ENCODE measurements at regions of chr5 and their contacts with region 1.

Region 1: DNA sequence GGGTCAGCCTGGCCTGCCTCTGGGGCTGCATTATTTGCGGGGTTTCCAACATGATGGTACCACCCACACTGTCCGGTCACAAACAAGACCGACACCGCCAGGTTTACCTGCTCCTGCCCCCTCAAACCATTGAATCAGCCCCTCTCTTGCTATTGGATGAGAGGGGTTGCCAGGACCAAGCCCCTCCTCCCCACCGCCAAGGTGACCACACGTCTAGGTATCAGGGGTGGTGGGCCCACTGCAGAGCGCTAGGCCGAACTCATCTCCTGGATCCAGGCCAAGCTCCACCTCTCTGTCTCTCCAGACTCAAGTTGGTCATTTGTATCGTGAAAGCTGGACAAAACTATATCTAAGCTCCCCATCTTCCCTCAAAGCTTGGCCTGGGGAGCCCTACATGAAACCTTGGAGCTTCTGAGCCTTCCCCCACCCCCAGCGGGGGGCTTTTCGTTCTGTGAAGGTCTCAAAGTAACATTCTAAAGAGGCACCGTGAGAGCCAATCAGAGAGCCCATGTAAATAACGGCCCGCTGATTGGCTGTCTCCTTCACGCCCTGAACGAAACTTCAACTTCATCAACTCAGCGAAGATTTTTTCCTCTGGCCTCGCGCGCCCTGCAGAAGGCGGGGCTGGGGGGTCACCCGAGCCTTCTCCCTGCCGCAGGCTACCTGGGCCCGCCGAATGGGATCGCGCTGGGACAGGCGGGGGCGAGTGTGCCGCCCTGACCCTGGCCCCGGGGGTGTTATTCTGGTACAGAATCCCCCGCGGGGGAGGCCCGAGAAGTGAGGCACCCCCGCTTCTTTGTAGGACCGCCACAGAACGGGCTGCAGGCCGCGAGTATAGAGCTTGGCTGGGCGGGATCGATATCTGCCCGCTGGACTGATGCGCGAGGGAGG is 49.6 kb upstream of the PSD2 start:
- DNase-seq: peak; percentile 50
- H3K4me3 Mint-ChIP-seq: peak overlapping the region; percentile 72
- H3K27ac Mint-ChIP-seq: no peak overlapping the region
- H3K4me1 Mint-ChIP-seq: peaks cover 21% of the 10 kb centered on the region
- H3K27me3 Mint-ChIP-seq: peaks cover 15% of the 10 kb centered on the region

Region 2: DNA sequence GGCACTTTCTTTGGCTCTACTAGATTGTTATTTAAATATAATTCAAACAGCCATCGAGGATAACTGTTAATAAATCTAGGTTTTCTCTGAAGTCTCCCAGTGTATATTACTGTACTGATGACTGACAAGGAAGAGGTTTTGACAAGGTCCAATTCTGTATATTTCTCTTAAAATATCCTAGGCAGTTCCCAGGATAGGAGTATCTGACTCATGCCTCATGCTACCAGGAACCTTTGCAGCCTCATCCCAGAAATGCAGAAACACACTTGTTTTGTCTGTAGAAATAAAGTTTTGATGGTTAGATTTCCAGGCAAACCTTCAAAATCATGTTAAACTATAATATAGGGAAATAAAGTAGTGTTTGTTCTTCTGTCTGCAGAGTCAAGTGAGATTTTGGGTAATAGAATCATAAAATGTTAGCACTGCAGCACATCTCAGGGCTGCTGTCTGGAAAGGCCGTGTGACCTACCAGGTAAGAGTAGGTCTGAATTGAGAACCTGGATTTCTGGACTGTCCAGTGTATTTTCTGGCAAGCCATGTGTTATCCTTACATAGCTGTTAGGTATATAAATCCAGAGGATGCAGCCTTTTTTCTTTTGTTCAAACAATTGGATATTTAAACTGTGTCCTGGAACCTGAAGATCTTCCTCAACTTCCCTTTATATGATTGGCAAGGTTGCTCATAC is 176.6 kb before region 1 on chr5:
- CTCF ChIA-PET with region 1: no interaction called
- intact Hi-C with region 1: no loop called
- DNase-seq: no peak
- H3K4me3 Mint-ChIP-seq: no peak overlapping the region
- H3K27ac Mint-ChIP-seq: peak overlapping the region; percentile 55
- H3K4me1 Mint-ChIP-seq: peaks cover 81% of the 10 kb centered on the region
- H3K27me3 Mint-ChIP-seq: no peaks in the 10 kb centered on the region

Region 3: DNA sequence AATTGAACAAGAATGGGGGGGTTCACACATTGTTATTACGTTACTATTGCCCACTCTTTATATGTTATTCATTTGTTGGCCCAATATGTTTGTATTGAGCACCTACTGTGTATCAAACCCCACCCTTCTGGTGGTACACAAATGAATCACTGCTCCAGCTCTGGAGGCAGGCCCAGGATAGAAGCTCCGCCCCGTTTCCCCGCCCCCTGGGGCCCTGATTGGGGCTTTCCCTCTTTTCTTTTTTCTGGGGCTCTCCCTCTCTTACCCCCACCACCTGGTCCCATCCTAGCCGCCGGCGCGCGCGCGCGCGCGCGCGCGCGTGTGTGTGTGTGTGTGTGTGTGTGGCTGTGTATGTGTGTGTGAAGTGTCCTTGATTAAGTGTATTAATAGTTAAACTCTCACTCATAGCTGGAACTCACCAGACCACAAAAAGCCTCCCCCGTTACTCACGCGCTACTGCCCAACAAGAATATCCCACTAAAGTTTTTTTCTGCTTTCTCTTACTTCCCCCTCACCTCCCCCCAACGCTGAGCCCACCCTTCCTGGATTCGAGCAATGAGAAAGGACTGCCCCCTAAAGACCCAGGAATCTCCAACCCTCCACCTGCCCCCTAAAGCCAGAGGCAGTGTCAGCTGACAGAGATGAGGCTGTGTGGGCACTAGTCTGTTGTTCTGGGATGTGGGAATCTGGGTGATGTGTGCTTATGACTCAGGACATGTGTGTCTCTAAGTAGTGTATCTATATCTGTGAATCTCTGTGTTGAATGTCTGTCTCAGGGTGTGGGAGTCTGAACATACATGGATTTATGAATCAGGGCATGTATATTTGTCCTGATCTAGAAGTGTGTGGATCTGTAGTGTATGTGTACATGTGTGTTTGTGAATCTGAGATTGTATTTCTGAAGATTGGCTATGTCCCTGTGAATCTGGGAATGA is 93.9 kb before region 1 on chr5:
- CTCF ChIA-PET with region 1: no interaction called
- intact Hi-C with region 1: loop called (anchors 1 kb)
- DNase-seq: peak; percentile 82
- H3K4me3 Mint-ChIP-seq: no peak overlapping the region
- H3K27ac Mint-ChIP-seq: no peak overlapping the region
- H3K4me1 Mint-ChIP-seq: peaks cover 31% of the 10 kb centered on the region
- H3K27me3 Mint-ChIP-seq: peaks cover 49% of the 10 kb centered on the region

Region 4: GRCh38 chr5:139696894-139697658 is 49.0 kb before region 1 on chr5:
- CTCF ChIA-PET with region 1: no interaction called
- intact Hi-C with region 1: no loop called
- DNase-seq: peak; percentile 44
- H3K4me3 Mint-ChIP-seq: peak overlapping the region; percentile 46
- H3K27ac Mint-ChIP-seq: no peak overlapping the region
- H3K4me1 Mint-ChIP-seq: peaks cover 11% of the 10 kb centered on the region
- H3K27me3 Mint-ChIP-seq: peaks cover 9% of the 10 kb centered on the region

Region 5: DNA sequence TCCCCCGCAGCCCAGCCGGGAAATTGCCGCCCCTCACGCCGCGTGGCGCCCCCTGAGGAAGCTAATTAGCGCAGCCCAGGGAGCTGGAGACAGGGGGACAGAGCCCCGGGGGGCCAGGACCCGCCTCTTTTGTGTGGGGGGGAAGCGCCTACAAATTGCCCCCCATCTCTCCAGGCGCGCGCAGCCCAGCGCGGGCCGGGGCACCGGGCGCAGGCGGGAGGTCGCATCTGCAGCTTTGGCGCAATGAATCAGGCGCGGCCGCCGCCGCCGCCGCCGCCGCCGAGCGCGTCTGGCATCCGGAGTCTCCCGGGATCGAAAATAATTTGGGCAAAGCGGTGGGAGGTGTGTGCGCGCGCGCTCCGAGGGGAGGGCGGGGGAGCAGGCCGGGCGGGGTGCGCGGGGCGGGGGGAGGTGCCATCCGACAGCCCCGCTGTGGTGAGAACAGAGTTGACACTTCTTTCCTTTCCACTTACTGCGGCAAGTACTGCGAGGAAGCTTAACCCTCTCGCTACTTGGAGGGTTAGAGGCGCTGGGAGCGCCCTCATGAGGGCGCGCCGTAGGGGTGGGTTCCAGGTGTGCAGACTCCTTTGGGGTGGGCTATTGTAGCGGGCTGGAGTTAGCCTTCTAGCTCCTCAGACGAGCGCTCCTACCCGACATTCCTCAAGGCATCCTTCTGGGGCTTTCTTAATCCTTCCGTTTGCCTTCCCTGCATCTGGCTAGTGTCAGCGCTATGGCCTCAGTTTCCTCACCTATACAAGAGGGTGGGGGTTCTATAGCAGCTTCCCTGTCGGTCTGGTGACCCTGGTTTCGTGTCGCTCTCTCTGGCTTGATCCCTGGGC is 34.8 kb before region 1 on chr5:
- CTCF ChIA-PET with region 1: interaction called, 3 read pairs
- intact Hi-C with region 1: loop called (anchors 2 kb)
- DNase-seq: peak; percentile 66
- H3K4me3 Mint-ChIP-seq: peak overlapping the region; percentile 62
- H3K27ac Mint-ChIP-seq: no peak overlapping the region
- H3K4me1 Mint-ChIP-seq: peaks cover 10% of the 10 kb centered on the region
- H3K27me3 Mint-ChIP-seq: peaks cover 2% of the 10 kb centered on the region